ENCODE measurements at regions of chr1 and their contacts with region 1.

Region 1: GRCh38 chr1:201254625-201255506 is 28.4 kb upstream of the PKP1 start:
- DNase-seq: peak; percentile 97
- H3K4me3 ChIP-seq: no peak overlapping the region
- H3K27ac ChIP-seq: no peak overlapping the region
- H3K4me1 ChIP-seq: peaks cover 0 to 11% of the 10 kb centered on the region in 2 experiments; a peak in 1 of 4 replicates
- H3K27me3 ChIP-seq: no peaks in the 10 kb centered on the region
- CTCF ChIP-seq: peak; percentile 97
- EP300 ChIP-seq: no peak
- RAD21 ChIP-seq: peak; percentile 97

Region 2: GRCh38 chr1:200880212-200880611 is 374.7 kb before region 1 on chr1:
- CTCF ChIA-PET with region 1: no interaction called
- POLR2A ChIA-PET with region 1: no interaction called
- DNase-seq: no peak
- H3K4me3 ChIP-seq: no peak overlapping the region
- H3K27ac ChIP-seq: no peak overlapping the region
- H3K4me1 ChIP-seq: no peaks in the 10 kb centered on the region; a peak in 1 of 4 replicates
- H3K27me3 ChIP-seq: no peaks in the 10 kb centered on the region; the same call in 1 of the 2 replicates
- CTCF ChIP-seq: no peak
- EP300 ChIP-seq: no peak
- RAD21 ChIP-seq: no peak

Region 3: DNA sequence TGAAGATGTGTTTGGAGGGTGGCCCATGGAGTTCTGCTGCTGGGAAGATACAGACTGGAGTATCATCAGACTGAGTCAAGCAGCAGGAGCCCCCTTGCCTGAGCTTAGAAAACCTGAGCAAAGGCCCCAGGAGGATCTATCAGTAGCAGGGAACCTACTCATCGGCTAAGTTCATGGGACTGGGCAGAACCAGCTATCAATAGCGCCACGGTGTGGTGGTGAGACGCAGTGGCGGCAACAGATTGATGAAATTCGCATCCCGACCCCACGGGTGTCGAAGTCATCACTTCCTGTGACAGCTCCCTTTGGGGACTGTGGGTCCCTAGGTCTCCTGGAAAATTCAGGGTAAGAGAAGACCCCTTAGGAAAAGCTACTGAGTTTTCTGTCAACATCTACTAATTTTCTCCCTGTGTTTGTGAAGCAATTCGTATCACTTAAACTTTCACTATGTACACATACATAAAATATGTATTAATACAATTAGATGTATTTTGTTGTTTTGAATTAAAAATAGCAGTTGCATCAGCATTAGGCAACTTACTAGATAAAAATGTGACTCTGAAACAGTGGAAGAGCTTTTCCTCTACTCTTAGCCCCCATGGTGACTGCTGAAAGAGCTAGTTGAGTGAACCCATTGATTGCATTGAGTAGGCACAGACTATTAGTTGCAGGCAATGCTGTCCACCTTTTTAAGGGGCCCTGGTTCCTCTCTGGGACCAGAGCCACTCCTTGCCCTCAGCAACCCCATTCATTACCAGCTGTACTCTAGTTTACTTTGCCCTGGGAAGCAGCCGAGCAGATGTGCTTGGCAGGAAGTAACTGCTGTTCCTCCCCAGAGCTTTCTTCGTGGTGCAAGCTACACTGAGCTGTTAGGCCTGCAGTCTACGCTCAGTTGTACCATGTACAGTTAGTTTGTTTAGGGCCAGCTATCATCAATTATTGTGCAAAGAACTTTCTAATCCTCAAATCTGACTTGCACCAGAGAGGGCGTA is 135.4 kb before region 1 on chr1:
- CTCF ChIA-PET with region 1: no interaction called
- POLR2A ChIA-PET with region 1: no interaction called
- DNase-seq: peak; percentile 59
- H3K4me3 ChIP-seq: no peak overlapping the region; a peak in 1 of 4 replicates
- H3K27ac ChIP-seq: no peak overlapping the region
- H3K4me1 ChIP-seq: peaks cover 0 to 3% of the 10 kb centered on the region in 2 experiments; a peak in 1 of 4 replicates
- H3K27me3 ChIP-seq: peaks cover 20% of the 10 kb centered on the region
- CTCF ChIP-seq: peak; percentile 64
- EP300 ChIP-seq: no peak
- RAD21 ChIP-seq: peak; percentile 50

Region 4: DNA sequence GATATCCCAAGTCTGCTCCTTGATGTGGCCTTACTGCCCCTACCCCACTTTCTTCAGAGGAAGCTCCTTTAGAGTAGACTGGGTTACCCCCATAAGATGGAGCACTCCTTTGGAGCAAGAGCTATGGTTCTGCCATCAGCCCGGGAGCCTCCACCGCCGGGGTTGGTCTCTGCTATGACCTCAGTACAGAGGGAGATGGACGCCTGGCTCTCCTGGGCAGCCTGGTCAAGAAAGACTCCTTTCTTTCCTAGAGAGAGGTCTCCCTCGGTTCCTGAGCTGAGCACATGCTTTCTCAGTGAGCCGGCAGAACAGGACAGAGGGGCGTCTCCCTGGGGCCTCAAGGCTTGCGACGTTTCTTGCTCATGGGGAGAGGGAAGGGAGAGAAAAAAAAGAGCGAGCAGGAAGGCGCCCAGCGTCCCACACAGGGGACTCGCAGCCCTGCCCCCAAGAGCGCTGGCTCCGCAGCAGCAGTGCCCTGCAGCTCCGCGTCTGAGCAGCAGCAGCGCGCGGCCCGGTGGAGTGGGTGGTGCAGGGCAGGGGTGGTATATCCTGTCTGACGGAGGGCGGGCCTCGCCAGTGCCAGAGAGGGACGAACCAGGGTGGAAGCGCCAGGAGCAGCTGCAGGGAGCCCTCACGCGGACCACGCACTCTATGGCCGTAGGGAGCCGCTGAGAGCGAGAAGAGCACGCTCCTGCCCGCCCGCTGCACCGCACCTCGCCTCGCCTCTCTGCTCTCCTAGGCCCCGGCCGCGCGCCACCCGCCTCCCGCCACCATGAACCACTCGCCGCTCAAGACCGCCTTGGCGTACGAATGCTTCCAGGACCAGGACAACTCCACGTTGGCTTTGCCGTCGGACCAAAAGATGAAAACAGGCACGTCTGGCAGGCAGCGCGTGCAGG is 28.3 kb after region 1 on chr1 and contains the start of gene PKP1:
- CTCF ChIA-PET with region 1: interaction called, 12 read pairs
- POLR2A ChIA-PET with region 1: no interaction called
- DNase-seq: no peak
- H3K4me3 ChIP-seq: no peak within 1 kb of the TSS
- H3K27ac ChIP-seq: no peak within 1 kb of the TSS
- H3K4me1 ChIP-seq: peaks cover 0 to 17% of the 10 kb centered on the region in 2 experiments; a peak in 2 of 4 replicates
- H3K27me3 ChIP-seq: peaks cover 5% of the 10 kb centered on the region; the same call in 1 of the 2 replicates
- CTCF ChIP-seq: no peak
- EP300 ChIP-seq: no peak
- RAD21 ChIP-seq: no peak
- polyA plus RNA-seq, gene PKP1: not detected in 2 replicates

Region 5: GRCh38 chr1:201309426-201309825 is 54.6 kb after region 1 on chr1:
- CTCF ChIA-PET with region 1: interaction called, 32 read pairs
- POLR2A ChIA-PET with region 1: no interaction called
- DNase-seq: peak; percentile 90
- H3K4me3 ChIP-seq: no peak overlapping the region
- H3K27ac ChIP-seq: peak overlapping the region; percentile 70 to 89
- H3K4me1 ChIP-seq: peaks cover 41 to 46% of the 10 kb centered on the region in 2 experiments; a peak in 3 of 4 replicates
- H3K27me3 ChIP-seq: no peaks in the 10 kb centered on the region
- CTCF ChIP-seq: peak; percentile 52
- EP300 ChIP-seq: peak in 1 of 2 experiments; percentile 93; a peak in 2 of 4 replicates
- RAD21 ChIP-seq: peak; percentile 85

Region 6: DNA sequence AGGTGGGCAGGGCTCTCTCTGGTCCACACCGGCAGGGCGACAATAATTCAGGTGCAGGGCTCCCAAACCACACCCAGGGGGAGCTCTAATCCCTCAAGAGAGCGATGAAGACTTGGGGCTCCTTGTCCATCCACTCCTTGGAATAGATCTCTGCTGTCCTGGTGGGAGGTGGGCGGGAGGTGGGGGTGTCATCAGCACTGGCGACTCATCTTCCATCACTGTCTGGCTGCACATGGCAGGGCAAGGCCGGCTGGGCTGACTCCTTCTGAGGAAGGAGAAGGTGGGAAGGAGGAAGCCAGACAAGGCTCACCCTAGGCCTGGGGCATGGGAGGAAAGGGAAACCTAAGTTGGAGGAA is 93.3 kb after region 1 on chr1:
- CTCF ChIA-PET with region 1: interaction called, 329 read pairs
- POLR2A ChIA-PET with region 1: no interaction called
- DNase-seq: peak; percentile 76
- H3K4me3 ChIP-seq: no peak overlapping the region
- H3K27ac ChIP-seq: no peak overlapping the region
- H3K4me1 ChIP-seq: peaks cover 0 to 7% of the 10 kb centered on the region in 2 experiments; a peak in 2 of 4 replicates
- H3K27me3 ChIP-seq: no peaks in the 10 kb centered on the region; the same call in 1 of the 2 replicates
- CTCF ChIP-seq: peak; percentile 65
- EP300 ChIP-seq: no peak
- RAD21 ChIP-seq: peak; percentile 58

Region 7: DNA sequence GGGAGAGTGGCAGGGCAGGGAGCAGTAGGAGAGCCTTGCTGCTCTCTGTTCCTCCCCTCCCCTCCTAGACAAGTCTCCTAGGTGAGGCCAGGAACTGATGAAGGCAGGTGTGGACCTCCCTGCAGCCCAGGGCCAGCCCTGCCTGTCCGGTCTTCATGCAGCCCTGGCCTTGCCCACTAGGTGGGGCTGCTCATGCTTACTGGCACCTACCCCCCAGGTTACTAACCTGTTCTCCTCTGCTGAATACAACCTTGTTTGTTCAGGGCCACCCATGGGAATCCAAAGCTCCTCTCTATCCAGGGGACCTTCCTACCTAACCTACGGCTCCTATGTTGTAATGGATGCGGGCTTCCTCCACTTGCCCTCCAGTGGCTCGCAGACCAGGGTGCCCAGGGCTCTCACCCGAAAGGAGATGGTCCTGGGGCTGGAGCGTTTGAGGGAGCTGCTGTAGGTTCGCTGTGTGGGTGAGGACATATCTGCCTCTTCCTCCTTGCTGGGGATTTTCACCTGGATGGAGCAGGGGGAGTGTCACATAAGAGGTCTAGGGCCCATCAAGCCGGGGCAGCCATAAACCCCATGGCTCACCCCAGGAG is 130.5 kb after region 1 on chr1:
- CTCF ChIA-PET with region 1: interaction called, 15 read pairs
- POLR2A ChIA-PET with region 1: no interaction called
- DNase-seq: peak; percentile 82
- H3K4me3 ChIP-seq: no peak overlapping the region; a peak in 1 of 4 replicates
- H3K27ac ChIP-seq: no peak overlapping the region
- H3K4me1 ChIP-seq: peaks cover 5 to 11% of the 10 kb centered on the region in 2 experiments; a peak in 3 of 4 replicates
- H3K27me3 ChIP-seq: no peaks in the 10 kb centered on the region
- CTCF ChIP-seq: peak; percentile 85
- EP300 ChIP-seq: no peak
- RAD21 ChIP-seq: peak; percentile 61

Measured in SK-N-SH (cell line).